ENCODE measurements at regions of chr1 and their contacts with region 1.

Region 1: DNA sequence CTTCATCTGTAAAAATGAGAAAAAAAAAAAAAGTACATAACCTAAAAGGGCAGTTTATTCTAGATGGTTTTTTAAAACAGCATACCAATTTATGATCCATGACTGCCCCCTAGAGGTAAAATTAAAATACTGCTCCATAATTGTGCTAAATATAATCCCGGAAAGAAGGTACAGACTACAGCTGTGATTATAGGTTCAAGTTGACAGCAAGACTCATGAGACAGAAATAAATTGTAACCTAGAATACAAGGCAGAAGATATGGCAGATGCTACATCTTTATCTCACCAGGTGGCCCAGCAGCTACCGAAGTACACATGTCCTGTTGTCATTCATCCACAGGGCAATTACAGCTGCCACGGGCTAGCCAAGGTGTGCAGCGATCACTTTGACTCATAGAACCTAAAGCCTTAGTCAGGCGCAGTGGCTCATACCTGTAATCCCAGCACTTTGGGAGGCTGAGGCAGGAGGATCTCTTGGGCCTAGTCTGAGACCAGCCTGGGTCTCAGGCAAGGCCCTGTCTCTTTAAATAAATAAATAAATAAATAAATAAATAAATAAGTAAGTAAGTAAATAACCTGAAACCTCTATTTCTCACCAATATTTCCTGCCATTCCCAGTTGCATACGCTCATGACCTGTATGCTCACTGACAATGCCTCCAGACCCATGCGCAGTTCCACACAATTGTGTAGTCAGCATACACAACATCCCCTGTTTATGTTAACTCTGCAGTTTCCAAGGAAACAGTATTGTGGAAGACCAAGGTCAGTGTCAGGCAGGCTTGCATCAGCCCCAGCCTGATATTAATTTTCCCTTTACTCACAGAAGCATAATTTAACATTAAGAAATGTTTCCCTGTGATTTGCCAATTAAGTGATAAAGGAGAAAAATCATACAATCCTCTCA is 18.3 kb upstream of the PPIE start:
- DNase-seq: peak; percentile 70
- H3K4me3 Mint-ChIP-seq: no peak overlapping the region
- H3K27ac Mint-ChIP-seq: no peak overlapping the region
- H3K4me1 Mint-ChIP-seq: no peaks in the 10 kb centered on the region
- H3K27me3 Mint-ChIP-seq: peaks cover 54% of the 10 kb centered on the region

Region 2: DNA sequence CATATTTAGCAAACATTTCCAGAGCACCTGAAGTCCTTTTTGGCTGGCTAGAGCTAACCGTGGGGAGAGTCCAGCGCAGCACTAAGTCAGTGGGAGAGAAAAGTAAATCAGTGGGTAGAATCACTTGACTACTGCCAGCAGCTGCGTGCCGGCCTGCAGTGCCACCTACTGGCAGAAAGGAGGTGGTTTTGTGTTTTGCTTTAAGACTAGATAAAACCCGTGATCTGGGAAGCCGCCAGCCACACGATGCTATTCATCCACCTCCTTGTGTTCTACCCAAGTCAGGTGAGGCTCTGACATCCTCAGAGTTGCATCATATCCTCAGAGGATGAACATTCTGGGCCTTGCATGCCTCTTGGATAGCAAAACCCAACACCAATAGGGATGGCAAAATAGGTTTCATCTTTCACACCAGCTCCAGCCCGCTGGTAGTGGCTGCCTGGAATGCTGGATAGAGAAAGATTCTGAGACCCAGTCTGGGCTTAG is 66.8 kb before region 1 on chr1:
- intact Hi-C with region 1: loop called (anchors 1 kb)
- DNase-seq: peak; percentile 91
- H3K4me3 Mint-ChIP-seq: no peak overlapping the region
- H3K27ac Mint-ChIP-seq: no peak overlapping the region
- H3K4me1 Mint-ChIP-seq: peaks cover 15% of the 10 kb centered on the region
- H3K27me3 Mint-ChIP-seq: peaks cover 6% of the 10 kb centered on the region

Region 3: GRCh38 chr1:39666772-39667171 is 53.6 kb before region 1 on chr1:
- intact Hi-C with region 1: loop called (anchors 2 kb)
- DNase-seq: peak; percentile 78
- H3K4me3 Mint-ChIP-seq: peak overlapping the region; percentile 20
- H3K27ac Mint-ChIP-seq: peak overlapping the region; percentile 47
- H3K4me1 Mint-ChIP-seq: peaks cover 26% of the 10 kb centered on the region
- H3K27me3 Mint-ChIP-seq: peaks cover 12% of the 10 kb centered on the region